H1 (cell line): ENCODE measurements at regions of chr5 and their contacts with region 1.

Region 1: DNA sequence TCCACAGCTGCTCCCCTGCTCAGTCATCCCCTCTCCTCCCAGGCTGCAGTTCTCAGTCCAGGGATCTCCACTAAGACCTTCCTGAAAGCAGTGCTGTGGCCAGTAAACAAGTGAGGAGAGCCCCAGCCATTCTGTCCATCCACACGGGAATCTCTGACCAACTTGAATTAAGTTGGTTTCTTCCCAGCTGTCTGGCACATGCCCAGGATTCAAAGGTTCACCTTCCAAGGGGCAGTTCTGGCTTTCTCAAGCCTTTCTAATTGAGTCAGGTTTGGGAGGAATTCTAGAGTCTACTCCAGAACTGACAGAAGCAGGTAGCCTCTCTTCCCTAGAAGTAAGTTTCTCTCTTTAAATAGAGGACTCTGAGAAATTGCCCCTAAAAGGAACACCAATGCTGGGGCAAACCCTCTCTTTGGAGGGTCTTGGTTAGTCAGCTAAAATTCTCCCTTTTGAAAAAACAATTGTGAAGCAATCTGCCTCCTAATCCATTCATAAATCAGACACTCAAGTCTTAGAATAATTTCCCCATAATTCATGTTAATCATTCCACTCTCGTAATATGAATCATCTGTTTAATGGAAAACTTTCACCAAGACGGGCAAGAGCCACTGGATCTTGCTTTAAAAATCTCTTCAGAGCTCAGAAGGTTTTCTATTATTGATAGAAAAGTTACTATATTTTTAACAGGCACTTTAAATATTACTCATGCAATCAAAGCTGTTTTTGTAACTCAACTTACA is 133.8 kb downstream of the SPOCK1 start:
- DNase-seq: no peak
- H3K4me3 ChIP-seq: no peak overlapping the region
- H3K27ac ChIP-seq: no peak overlapping the region
- H3K4me1 ChIP-seq: no peaks in the 10 kb centered on the region
- H3K27me3 ChIP-seq: no peaks in the 10 kb centered on the region
- CTCF ChIP-seq: no peak
- EP300 ChIP-seq: no peak
- POLR2A ChIP-seq: no peak
- RAD21 ChIP-seq: no peak

Region 2: DNA sequence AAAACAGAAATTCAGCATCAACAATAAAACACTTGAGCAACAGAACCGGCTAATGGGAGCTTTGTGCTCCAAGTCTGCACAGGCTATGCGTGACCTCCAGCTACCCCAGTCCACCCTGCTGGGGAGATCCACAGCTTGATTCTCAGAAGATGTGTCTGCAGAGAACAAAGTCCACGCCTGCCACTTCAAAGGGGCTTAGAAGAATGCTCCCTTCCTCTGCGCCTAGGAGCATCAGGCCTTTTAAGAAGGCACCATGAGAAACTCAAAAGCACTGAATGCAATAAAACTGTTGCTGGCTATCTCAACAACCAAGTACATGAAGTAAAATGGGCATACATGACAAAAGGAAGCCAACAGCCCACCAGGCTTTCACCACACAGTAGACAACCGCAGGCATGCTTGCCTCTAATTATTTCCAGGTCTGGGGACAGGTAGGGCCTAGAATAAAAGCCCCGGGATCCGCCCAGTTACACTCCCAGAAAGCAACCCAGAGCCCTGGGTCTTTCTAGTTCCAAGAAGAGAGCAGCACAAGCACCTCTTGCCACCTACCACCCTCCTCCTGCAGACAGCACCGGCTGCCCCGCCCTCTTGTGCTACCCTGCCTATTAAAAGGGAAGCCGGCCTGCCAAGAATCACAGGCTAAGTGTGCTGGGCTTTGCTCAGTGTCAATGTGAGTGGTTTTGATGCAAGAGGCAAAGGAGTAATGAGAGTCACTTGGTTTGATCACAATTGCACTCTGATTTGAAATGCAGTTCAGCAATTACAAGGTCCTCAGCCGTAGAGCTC is 10.6 kb after region 1 on chr5:
- CTCF ChIA-PET with region 1: interaction called, 13 read pairs
- POLR2A ChIA-PET with region 1: interaction called, 4 read pairs
- DNase-seq: no peak
- H3K4me3 ChIP-seq: no peak overlapping the region
- H3K27ac ChIP-seq: no peak overlapping the region
- H3K4me1 ChIP-seq: no peaks in the 10 kb centered on the region; a peak in 2 of 7 replicates
- H3K27me3 ChIP-seq: no peaks in the 10 kb centered on the region
- CTCF ChIP-seq: no peak
- EP300 ChIP-seq: no peak
- POLR2A ChIP-seq: no peak
- RAD21 ChIP-seq: no peak

Region 3: DNA sequence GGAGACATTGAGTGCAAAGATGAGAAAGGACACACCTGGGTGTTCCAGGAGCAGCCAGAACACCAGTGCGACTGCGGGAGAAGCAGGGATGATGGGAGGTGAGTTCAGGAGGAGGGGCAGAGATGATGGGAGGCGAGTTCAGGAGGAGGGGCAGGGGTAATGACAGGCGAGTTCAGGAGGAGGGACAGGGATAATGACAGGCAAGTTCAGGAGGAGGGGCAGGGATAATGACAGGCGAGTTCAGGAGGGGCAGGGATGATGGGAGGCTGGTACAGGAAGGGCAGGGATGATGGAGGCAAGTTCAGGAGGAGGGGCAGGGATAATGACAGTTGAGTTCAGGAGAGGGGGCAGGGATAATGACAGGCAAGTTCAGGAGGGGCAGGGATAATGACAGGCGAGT is 151.0 kb after region 1 on chr5:
- CTCF ChIA-PET with region 1: no interaction called
- POLR2A ChIA-PET with region 1: no interaction called
- DNase-seq: no peak
- H3K4me3 ChIP-seq: no peak overlapping the region
- H3K27ac ChIP-seq: no peak overlapping the region
- H3K4me1 ChIP-seq: no peaks in the 10 kb centered on the region
- H3K27me3 ChIP-seq: no peaks in the 10 kb centered on the region; a peak in 1 of 7 replicates
- CTCF ChIP-seq: no peak
- EP300 ChIP-seq: no peak
- POLR2A ChIP-seq: no peak
- RAD21 ChIP-seq: no peak